Ascending aorta (tissue), 2 donors: ENCODE measurements at regions of chr19 and their contacts with region 1.

Region 1: DNA sequence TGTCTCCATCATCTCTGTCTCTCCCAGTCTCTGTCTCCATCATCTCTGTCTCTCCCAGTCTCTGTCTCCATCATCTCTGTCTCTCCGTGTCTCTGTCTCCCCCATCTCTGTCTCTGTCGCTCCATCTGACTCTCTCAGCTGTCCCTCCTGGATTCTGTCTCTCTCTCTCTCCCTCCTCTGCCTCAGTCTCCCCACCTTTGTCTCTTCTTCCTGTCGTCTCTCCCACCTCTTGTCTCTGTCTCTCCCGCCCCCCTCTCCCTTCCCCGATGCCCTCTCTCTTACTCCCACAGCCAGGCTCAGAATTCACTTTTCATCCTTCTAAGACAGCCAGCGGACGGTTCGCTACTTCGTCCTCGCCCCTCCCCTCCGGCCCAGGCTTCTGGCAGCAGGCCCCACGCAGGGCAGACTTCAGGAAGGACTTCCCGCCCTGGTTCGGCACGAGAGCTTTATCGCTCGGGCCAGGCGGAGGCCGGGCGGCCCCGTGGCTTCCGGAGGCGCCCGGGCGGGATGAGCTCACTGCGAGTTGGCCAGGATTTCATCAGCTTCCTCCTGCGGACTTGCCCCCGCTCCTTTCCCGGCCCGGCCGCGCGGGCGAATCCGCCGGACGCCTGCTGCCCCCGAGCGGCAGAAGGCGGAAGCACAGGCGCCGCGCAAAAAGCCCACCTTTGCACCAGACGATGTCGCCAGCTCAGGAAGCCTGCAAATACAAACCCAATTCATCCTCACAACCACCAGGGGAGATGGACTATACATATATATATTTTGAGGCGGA is 12.4 kb upstream of the CCDC9 start:
- DNase-seq: peak in 1 of 2 donors; percentile 97
- H3K4me3 ChIP-seq: peak overlapping the region; percentile 45 to 58
- H3K27ac ChIP-seq: peak overlapping the region; percentile 58 to 64
- H3K4me1 ChIP-seq: peaks cover 27 to 35% of the 10 kb centered on the region in 2 donors
- H3K27me3 ChIP-seq: no peaks in the 10 kb centered on the region
- CTCF ChIP-seq: peak; percentile 98 to 100 (median 99)

Region 2: GRCh38 chr19:46624958-46625661 is 618.9 kb before region 1 on chr19 and contains the start of gene PTGIR:
- intact Hi-C with region 1: loop called (anchors 10 kb)
- DNase-seq: peak; percentile 72 to 96
- H3K4me3 ChIP-seq: peak within 1 kb of the TSS; percentile 47 to 77
- H3K27ac ChIP-seq: peak within 1 kb of the TSS; percentile 97 to 98
- H3K4me1 ChIP-seq: peaks cover 23 to 46% of the 10 kb centered on the region in 2 donors
- H3K27me3 ChIP-seq: no peaks in the 10 kb centered on the region
- CTCF ChIP-seq: no peak
- total RNA-seq, gene PTGIR: 120 TPM

Region 3: DNA sequence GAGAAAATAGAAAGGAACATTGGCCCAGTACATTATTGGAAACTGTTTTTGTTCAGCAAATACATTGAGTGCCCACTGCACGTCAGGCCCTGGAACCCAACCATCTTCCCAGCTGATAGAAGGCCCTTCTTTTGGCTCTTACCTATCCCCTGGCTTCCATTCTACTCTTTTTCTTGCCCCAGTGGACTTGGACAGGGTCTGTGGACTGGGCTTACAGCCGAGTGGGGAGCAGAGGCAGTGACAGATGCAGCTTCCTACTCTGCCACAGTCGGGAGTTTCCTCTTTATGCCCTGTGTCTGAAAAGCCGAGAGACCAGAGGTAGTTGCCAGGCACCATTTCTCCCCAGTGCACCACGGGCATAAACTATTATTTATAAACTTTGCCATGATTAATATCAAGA is 312.8 kb before region 1 on chr19:
- intact Hi-C with region 1: loop called (anchors 2 kb)
- DNase-seq: no peak
- H3K4me3 ChIP-seq: no peak overlapping the region
- H3K27ac ChIP-seq: peak overlapping the region; percentile 36 to 58
- H3K4me1 ChIP-seq: peaks cover 18 to 58% of the 10 kb centered on the region in 2 donors
- H3K27me3 ChIP-seq: no peaks in the 10 kb centered on the region
- CTCF ChIP-seq: no peak

Region 4: GRCh38 chr19:47210689-47211316 is 33.2 kb before region 1 on chr19:
- intact Hi-C with region 1: loop called (anchors 1 kb)
- DNase-seq: peak in 1 of 2 donors; percentile 93
- H3K4me3 ChIP-seq: no peak overlapping the region
- H3K27ac ChIP-seq: peak overlapping the region; percentile 48 to 69
- H3K4me1 ChIP-seq: no peaks in the 10 kb centered on the region
- H3K27me3 ChIP-seq: no peaks in the 10 kb centered on the region
- CTCF ChIP-seq: peak; percentile 81 to 93 (median 83)

Region 5: GRCh38 chr19:47231215-47231984 is 12.6 kb before region 1 on chr19:
- intact Hi-C with region 1: loop called (anchors 1 kb)
- DNase-seq: peak; percentile 82 to 96
- H3K4me3 ChIP-seq: peak overlapping the region; percentile 88 to 91
- H3K27ac ChIP-seq: peak overlapping the region; percentile 79 to 100
- H3K4me1 ChIP-seq: peaks cover 15 to 22% of the 10 kb centered on the region in 2 donors
- H3K27me3 ChIP-seq: no peaks in the 10 kb centered on the region
- CTCF ChIP-seq: no peak

Region 6: DNA sequence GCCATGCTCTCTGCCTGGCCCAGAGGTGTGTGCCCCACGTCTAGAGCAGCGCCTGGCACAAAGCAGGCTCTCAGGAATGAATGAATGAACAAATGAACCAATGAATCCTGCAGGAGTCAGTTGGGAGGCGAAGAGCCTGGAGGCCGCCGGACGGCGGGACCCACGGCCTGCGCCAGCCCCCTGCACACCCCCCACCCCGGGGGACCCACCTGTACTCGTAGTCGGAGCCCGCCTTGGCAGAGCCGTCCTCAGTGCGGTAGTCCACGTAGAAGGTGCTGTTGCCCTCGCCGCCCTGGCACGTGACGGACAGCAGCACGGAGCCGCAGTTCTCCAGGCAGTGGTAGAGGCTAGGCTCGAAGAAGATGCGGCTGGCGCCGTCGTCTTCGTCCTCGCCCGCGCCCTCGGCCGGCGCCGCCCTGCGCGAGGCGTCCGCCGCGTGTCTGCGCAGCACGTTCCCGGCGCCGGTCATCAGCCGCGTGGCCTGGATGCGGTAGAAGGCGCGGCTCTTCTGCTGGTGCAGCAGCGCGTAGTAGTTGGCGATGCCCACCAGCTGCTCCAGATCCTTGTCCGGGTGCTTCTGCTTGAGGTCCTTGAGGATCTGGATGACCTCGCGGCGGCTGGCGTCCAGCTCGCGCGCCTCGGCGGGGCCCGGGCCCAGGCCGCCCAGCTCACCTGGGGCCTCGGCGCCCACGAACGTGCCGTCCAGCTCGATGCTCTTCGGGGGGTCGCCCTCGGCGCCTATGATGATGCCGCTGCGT is 212.9 kb after region 1 on chr19:
- intact Hi-C with region 1: no loop called
- DNase-seq: no peak
- H3K4me3 ChIP-seq: no peak overlapping the region
- H3K27ac ChIP-seq: no peak overlapping the region
- H3K4me1 ChIP-seq: no peaks in the 10 kb centered on the region
- H3K27me3 ChIP-seq: no peaks in the 10 kb centered on the region
- CTCF ChIP-seq: no peak